Activated B cell treated with CpG ODN at 0.5 μM for 24 hours (primary cell): ENCODE measurements at regions of chr5 and their contacts with region 1.

Region 1: GRCh38 chr5:159515909-159516415 is 185.7 kb upstream of the IL12B start:
- DNase-seq: peak; percentile 58
- ATAC-seq: peak; percentile 99
- H3K4me3 Mint-ChIP-seq: no peak overlapping the region
- H3K27ac Mint-ChIP-seq: no peak overlapping the region
- H3K4me1 Mint-ChIP-seq: peaks cover 7% of the 10 kb centered on the region
- H3K27me3 Mint-ChIP-seq: no peaks in the 10 kb centered on the region
- CTCF ChIP-seq: peak; percentile 19

Region 2: GRCh38 chr5:159469496-159470372 is 46.2 kb before region 1 on chr5:
- CTCF ChIA-PET with region 1: no interaction called
- POLR2A ChIA-PET with region 1: no interaction called
- intact Hi-C with region 1: no loop called
- DNase-seq: no peak
- ATAC-seq: peak; percentile 76
- H3K4me3 Mint-ChIP-seq: no peak overlapping the region
- H3K27ac Mint-ChIP-seq: no peak overlapping the region
- H3K4me1 Mint-ChIP-seq: peaks cover 16% of the 10 kb centered on the region
- H3K27me3 Mint-ChIP-seq: no peaks in the 10 kb centered on the region
- CTCF ChIP-seq: no peak

Region 3: DNA sequence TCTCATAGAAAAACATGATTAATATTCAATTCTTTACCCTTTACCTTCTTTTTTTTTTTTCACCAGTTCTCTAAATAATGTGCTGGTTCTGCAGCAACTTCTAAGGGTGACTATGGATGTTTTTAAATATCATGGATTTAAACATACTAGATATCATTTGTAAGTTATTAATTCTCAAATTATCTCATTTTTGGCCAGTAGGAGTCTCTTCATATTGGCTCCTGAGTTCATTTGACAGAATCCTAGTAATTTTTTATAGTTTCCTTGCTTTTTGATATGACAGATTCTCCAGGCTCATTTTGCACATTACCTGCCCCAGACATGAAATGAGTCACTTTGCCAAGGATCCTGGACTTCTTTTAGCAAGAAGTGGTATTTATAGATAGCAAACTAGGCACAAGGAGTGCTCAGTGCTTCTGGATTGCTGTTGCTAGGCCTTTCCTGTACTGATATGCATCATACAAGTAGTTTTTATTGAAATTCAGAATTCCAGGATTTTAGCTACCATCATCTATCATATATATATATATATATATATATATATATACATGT is 15.7 kb after region 1 on chr5:
- CTCF ChIA-PET with region 1: no interaction called
- POLR2A ChIA-PET with region 1: interaction called, 11 read pairs
- intact Hi-C with region 1: no loop called
- DNase-seq: no peak
- ATAC-seq: no peak
- H3K4me3 Mint-ChIP-seq: no peak overlapping the region
- H3K27ac Mint-ChIP-seq: no peak overlapping the region
- H3K4me1 Mint-ChIP-seq: no peaks in the 10 kb centered on the region
- H3K27me3 Mint-ChIP-seq: no peaks in the 10 kb centered on the region
- CTCF ChIP-seq: no peak

Region 4: DNA sequence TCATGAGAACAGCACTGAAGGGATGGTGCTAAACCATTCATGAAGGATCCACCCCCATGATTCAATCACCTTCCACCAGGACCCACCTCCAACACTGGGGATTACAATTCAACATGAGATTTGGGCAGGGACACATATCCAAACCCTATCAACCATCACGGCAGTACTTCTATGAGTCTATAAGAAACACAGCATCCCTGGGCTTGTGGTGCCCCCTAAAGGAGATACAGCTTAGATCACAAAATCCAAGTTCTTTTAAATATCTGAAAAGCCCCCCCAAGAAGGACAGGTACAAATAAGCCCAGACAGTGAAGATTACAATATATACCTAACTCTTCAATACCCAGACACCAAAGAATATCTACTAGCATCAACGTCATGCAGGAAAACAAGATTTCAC is 166.7 kb after region 1 on chr5:
- CTCF ChIA-PET with region 1: no interaction called
- POLR2A ChIA-PET with region 1: no interaction called
- intact Hi-C with region 1: no loop called
- DNase-seq: no peak
- ATAC-seq: no peak
- H3K4me3 Mint-ChIP-seq: no peak overlapping the region
- H3K27ac Mint-ChIP-seq: no peak overlapping the region
- H3K4me1 Mint-ChIP-seq: peaks cover 4% of the 10 kb centered on the region
- H3K27me3 Mint-ChIP-seq: peaks cover 9% of the 10 kb centered on the region
- CTCF ChIP-seq: no peak

Region 5: DNA sequence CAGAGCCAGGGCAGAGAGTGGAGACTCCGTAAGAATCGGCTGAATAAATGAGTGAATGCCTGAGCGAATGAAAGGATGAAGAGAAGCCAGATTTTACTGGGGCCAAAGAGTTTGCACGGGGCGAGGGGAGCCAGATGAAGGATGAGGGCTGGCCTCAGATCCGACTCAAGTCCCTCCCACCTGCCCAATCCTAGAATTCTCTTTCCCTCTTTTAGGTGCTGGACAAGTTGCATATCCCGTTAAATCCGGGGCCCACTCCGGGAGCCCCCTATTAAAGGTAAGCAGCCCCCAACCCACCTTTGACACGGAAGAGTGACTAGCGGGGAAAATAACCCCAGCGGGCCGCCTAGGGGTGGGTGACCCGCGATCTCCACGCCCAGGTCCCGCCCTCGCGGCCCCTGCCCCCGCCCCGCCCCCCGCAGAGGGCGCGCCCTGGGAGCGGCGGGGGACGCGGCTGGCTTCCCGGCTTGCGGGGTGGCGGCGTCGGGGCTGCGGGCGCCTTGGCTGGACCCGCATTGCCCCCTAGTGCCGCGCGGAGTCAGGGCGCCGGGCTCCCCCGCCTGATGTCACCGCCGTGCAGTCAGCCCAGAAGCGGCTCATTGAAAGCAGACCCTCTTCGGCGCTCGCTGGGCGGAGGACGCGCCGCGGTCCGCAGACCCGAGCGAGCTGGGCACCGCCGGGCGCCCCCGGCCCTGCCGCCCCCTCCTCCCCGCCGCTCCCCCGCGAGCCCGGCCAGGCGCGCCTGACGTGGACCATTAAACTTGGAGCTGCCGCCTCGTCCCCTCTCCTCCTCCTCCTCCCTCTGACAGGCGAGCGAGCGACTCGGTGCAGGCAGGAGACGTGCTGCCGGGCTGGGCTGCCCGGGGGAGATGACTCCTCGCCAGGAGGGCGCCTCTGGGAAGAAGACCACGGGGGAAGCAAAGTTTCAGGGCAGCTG is 400.2 kb after region 1 on chr5 and contains the start of gene ADRA1B:
- CTCF ChIA-PET with region 1: no interaction called
- POLR2A ChIA-PET with region 1: no interaction called
- intact Hi-C with region 1: loop called (anchors 1 kb)
- DNase-seq: peak; percentile 55
- ATAC-seq: peak; percentile 96
- H3K4me3 Mint-ChIP-seq: peak within 1 kb of the TSS; percentile 57
- H3K27ac Mint-ChIP-seq: no peak within 1 kb of the TSS
- H3K4me1 Mint-ChIP-seq: peaks cover 14% of the 10 kb centered on the region
- H3K27me3 Mint-ChIP-seq: peaks cover 29% of the 10 kb centered on the region
- CTCF ChIP-seq: no peak
- total RNA-seq, gene ADRA1B: 0.49 and 0.53 TPM in 2 replicates

Region 6: GRCh38 chr5:159965031-159965837 is 449.3 kb after region 1 on chr5:
- CTCF ChIA-PET with region 1: interaction called, 3 read pairs
- POLR2A ChIA-PET with region 1: no interaction called
- intact Hi-C with region 1: loop called (anchors 2 kb)
- DNase-seq: no peak
- ATAC-seq: no peak
- H3K4me3 Mint-ChIP-seq: no peak overlapping the region
- H3K27ac Mint-ChIP-seq: no peak overlapping the region
- H3K4me1 Mint-ChIP-seq: no peaks in the 10 kb centered on the region
- H3K27me3 Mint-ChIP-seq: peaks cover 42% of the 10 kb centered on the region
- CTCF ChIP-seq: no peak